ENCODE measurements at regions of chr17 and their contacts with region 1.

Region 1: GRCh38 chr17:7252176-7253043 is at the start of gene ELP5:
- DNase-seq: peak; percentile 97
- H3K4me3 ChIP-seq: peak within 1 kb of the TSS; percentile 79 to 99 (median 88)
- H3K27ac ChIP-seq: peak within 1 kb of the TSS; percentile 97 to 99 (median 98)
- H3K4me1 ChIP-seq: peaks cover 0 to 43% (median 35%) of the 10 kb centered on the region in 4 donors
- H3K27me3 ChIP-seq: no peaks in the 10 kb centered on the region
- CTCF ChIP-seq: no peak
- EP300 ChIP-seq: peak in 2 of 4 donors; percentile 38 to 41
- POLR2A ChIP-seq: no peak
- total RNA-seq, gene ELP5: 28.4 to 40.0 (median 34.2) TPM

Region 2: GRCh38 chr17:7296189-7296902 is 43.9 kb after region 1 on chr17:
- intact Hi-C with region 1: loop called (anchors 2 kb)
- DNase-seq: peak; percentile 94
- H3K4me3 ChIP-seq: peak overlapping the region in 2 of 4 donors; percentile 14 to 25
- H3K27ac ChIP-seq: peak overlapping the region; percentile 76 to 83 (median 79)
- H3K4me1 ChIP-seq: peaks cover 0 to 55% (median 54%) of the 10 kb centered on the region in 4 donors
- H3K27me3 ChIP-seq: peaks cover 11 to 37% (median 18%) of the 10 kb centered on the region in 3 donors
- CTCF ChIP-seq: peak; percentile 93 to 96 (median 94)
- EP300 ChIP-seq: peak in 2 of 4 donors; percentile 78 to 92
- POLR2A ChIP-seq: no peak

Region 3: DNA sequence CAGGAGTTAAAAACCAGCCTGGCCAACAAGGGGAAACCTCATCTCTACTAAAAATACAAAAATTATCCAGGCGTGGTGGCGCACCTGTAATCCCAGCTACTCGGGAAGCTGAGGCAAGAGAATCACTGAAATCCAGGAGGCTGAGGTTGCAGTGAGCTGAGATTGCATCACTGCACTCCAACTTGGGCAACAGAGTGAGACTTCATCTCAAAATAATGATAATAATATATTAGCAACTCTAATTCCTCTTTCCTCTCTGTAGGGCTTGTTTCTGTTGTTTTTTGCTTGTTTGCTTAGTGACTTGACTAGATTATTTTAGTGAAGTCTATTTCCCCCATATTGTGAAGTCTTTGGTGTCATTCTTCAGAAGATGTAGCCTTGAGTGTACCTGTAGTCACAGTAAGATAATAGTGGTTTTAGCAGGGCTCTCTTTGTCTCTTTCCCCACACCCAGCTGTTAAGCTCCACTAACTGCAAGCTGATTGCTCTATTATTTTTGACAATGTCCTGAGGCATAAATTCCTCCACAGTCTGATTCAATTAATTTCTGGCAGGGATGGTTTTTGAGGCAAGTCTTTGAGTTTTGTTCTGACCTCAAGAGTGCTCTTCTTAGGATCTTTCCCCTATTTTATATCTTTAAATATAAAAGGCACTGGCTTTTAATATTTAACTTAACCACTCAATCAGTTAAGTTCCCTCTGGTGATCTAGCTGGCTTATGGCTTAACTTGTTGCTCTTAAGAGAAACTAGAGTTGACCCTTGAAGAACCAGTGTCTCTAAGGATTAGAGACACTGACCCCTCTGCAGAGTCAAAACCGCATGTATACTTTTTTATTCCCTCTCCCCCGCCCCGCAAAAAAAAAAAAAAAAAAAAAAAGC is 277.9 kb after region 1 on chr17:
- intact Hi-C with region 1: no loop called
- DNase-seq: no peak
- H3K4me3 ChIP-seq: no peak overlapping the region
- H3K27ac ChIP-seq: no peak overlapping the region
- H3K4me1 ChIP-seq: no peaks in the 10 kb centered on the region
- H3K27me3 ChIP-seq: no peaks in the 10 kb centered on the region
- CTCF ChIP-seq: no peak
- EP300 ChIP-seq: no peak
- POLR2A ChIP-seq: no peak

Measured in sigmoid colon (tissue), 7 donors.